ENCODE measurements at regions of chr6 and their contacts with region 1.

Region 1: DNA sequence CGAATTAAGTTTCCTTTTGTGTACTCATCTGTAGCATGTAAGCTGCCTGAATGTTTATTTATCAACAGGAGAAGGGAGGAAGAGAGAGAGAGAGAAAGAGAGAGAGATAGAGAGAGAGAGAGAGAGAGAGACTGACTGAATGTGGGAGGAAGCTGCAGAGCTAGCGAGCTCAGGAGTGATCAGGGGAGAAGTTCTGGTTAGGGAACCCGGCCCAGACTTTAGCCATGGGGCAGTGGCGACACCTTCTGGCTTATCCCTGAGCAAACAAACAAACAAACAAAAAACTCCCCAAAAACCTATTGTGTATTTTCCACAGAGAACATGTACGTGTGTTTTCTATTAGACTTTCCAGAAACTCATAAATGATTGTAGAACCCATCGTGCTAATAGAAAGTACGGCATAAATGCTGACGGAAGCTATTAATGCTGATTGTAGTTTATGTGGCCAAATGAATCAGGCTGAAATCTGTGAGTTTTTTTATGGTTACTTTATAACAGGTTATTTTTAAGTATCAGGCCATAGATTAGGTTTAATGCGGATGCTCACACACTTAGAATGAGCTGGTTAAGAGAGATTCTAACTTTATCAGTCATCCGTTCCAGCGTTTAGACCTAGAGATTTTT is 92.8 kb downstream of the CLIC5 start:
- DNase-seq: peak; percentile 83
- H3K4me3 Mint-ChIP-seq: no peak overlapping the region
- H3K27ac Mint-ChIP-seq: peak overlapping the region; percentile 71
- H3K4me1 Mint-ChIP-seq: peaks cover 34% of the 10 kb centered on the region
- H3K27me3 Mint-ChIP-seq: peaks cover 12% of the 10 kb centered on the region

Region 2: GRCh38 chr6:44593539-44593944 is 1329.3 kb before region 1 on chr6:
- CTCF ChIA-PET with region 1: interaction called, 4 read pairs
- intact Hi-C with region 1: loop called (anchors 1 kb)
- DNase-seq: peak; percentile 78
- H3K4me3 Mint-ChIP-seq: no peak overlapping the region
- H3K27ac Mint-ChIP-seq: no peak overlapping the region
- H3K4me1 Mint-ChIP-seq: peaks cover 3% of the 10 kb centered on the region
- H3K27me3 Mint-ChIP-seq: peaks cover 4% of the 10 kb centered on the region

Region 3: DNA sequence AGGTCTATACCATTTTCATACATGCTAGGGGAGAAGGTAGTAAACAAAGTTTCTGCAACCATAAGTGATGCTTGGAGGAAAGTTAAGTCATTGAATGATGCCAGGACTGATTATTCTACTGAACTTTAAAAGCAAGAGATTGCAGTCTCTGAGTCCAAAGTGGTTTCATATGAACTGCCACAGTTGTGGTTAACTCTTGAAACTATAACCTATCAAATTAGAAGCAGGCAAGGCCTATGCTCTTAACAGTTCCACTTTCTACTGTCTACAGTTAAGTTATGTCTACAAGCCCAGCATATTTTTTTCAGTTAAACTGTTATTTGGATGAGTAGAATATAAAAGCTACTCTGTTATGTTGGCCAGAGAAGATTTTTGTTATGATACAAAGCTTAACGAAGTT is 921.2 kb before region 1 on chr6:
- CTCF ChIA-PET with region 1: no interaction called
- intact Hi-C with region 1: loop called (anchors 10 kb)
- DNase-seq: no peak
- H3K4me3 Mint-ChIP-seq: no peak overlapping the region
- H3K27ac Mint-ChIP-seq: no peak overlapping the region
- H3K4me1 Mint-ChIP-seq: peaks cover 19% of the 10 kb centered on the region
- H3K27me3 Mint-ChIP-seq: no peaks in the 10 kb centered on the region

Region 4: DNA sequence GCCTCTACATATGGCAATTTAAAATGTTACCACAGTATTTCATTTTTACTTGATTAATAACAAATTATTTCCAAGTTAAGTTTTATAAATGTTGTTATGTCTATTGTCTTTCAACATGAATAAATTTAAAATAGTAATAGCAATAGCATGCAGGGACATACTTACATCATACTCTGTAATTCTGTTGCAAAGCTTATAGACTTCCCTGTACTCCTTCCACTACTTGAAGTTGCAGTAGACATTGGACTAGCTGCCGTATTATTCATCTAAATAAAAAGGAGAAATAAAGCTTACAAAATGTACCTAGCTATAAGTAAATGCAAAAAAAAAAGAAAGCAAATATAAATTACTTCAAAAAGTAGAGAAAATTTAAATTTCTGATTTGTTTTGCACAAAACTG is 557.8 kb before region 1 on chr6:
- CTCF ChIA-PET with region 1: no interaction called
- intact Hi-C with region 1: no loop called
- DNase-seq: no peak
- H3K4me3 Mint-ChIP-seq: no peak overlapping the region
- H3K27ac Mint-ChIP-seq: no peak overlapping the region
- H3K4me1 Mint-ChIP-seq: peaks cover 13% of the 10 kb centered on the region
- H3K27me3 Mint-ChIP-seq: no peaks in the 10 kb centered on the region

Region 5: DNA sequence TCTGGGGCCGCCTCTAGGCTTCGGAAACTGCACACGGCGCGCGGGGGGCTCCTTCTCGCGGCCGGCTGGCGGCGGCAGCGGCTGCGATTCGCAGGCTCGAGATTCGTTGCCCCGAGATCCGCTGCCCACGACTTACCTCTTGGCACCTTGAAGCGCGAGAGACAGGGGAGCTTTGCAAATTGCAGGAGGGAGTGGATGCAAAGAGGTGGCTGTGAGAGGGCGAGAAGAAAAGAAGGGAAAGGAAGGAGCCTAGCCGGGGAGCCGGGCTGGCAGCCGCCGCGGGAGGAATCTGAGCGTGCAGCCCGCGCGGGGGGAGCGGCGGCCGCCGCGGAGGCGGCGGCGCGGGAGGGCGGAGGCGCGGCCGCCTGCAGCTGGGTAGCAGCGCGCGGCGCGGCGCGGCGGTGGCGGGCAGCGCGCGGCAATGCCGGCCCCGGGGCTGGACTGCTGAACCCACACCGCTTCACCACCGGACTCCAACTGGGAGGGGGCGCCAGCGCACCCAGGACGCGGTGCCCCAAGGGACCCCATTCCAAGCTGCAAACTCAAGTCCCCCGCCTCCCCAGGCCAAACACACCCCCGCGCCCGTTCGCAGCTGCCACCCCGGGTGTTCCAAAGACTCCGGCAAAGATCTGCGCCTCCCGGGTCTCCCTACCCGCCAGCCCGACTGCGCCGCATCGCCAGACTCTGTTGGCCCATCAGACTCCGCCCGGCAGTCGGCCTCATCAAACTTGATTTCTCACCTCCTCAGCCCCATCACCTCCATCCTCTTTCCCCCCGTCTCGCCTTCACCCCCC is 500.9 kb before region 1 on chr6:
- CTCF ChIA-PET with region 1: interaction called, 6 read pairs
- intact Hi-C with region 1: loop called (anchors 1 kb)
- DNase-seq: peak; percentile 62
- H3K4me3 Mint-ChIP-seq: peak overlapping the region; percentile 93
- H3K27ac Mint-ChIP-seq: peak overlapping the region; percentile 88
- H3K4me1 Mint-ChIP-seq: peaks cover 29% of the 10 kb centered on the region
- H3K27me3 Mint-ChIP-seq: peaks cover 13% of the 10 kb centered on the region

Region 6: DNA sequence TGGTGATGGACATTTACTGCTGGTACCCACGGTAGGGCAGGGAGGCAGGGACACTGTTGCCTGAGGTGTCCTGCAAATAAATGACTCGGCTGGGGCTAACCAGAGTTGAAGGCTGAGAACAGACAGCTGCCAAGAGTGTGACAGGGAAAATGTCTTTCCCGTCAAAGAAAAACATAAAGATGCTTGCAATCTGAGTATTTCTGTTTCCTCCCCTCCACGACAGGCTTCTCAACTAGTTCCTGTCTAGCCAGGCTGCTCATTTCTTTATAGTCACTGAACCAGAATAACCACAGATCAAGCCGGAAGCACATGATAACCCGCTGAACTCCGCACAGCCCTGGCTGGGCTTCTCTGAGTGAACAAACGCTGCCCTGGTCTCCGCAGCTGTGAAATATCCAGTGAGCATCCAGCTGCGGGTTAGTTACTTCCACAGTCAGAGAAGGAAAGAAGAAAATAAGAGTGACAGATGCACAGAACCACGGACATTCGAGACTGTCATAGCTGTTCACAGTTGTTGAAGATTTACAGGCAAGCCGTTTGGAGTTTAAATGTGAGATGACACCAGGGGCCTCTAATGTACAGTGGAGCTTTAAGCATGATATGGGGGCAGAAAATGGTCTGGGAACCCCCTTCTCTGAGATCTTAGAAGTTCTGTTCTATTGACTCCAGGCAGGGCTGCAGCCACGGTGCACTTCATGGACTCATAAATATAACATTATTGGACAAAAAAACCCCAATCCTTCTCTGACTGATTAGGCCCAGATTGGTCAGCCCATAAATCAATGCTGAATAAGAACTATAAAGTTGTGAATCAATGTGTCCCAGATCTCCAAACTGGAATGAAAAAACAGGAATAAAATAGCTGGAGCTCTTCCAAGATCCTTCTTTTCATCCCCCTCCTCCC is 245.2 kb before region 1 on chr6:
- CTCF ChIA-PET with region 1: no interaction called
- intact Hi-C with region 1: loop called (anchors 1 kb)
- DNase-seq: peak; percentile 74
- H3K4me3 Mint-ChIP-seq: peak overlapping the region; percentile 45
- H3K27ac Mint-ChIP-seq: peak overlapping the region; percentile 68
- H3K4me1 Mint-ChIP-seq: peaks cover 33% of the 10 kb centered on the region
- H3K27me3 Mint-ChIP-seq: no peaks in the 10 kb centered on the region

Region 7: DNA sequence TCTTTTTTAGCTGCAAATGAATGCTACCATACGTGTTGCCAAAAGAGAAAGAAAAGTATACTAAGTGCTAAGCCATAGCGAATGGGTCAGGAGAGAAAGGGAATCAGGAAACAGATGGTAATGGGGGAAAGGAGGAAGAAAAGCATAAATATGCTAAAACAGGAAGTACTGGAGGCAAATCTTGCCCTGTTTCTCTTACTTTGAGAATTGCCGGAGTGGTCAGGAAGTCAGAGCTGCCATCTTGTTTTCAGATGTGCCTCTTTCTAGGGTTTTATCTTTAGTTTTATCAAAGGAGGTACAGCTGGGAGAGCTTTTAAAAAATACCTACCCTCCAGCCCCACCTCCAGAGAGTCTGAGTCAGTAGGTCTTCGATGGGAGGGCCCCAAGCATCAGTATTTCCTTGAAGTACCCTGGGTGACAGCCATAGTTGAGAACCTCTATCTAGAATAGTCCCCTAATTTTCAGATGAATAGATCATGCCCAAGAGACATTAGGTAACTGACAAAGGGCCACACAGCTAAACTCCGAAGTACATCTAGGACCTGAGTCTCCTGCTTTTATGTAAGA is 100.5 kb before region 1 on chr6:
- CTCF ChIA-PET with region 1: no interaction called
- intact Hi-C with region 1: loop called (anchors 1 kb)
- DNase-seq: peak; percentile 59
- H3K4me3 Mint-ChIP-seq: peak overlapping the region; percentile 1
- H3K27ac Mint-ChIP-seq: peak overlapping the region; percentile 74
- H3K4me1 Mint-ChIP-seq: peaks cover 19% of the 10 kb centered on the region
- H3K27me3 Mint-ChIP-seq: peaks cover 4% of the 10 kb centered on the region

Region 8: DNA sequence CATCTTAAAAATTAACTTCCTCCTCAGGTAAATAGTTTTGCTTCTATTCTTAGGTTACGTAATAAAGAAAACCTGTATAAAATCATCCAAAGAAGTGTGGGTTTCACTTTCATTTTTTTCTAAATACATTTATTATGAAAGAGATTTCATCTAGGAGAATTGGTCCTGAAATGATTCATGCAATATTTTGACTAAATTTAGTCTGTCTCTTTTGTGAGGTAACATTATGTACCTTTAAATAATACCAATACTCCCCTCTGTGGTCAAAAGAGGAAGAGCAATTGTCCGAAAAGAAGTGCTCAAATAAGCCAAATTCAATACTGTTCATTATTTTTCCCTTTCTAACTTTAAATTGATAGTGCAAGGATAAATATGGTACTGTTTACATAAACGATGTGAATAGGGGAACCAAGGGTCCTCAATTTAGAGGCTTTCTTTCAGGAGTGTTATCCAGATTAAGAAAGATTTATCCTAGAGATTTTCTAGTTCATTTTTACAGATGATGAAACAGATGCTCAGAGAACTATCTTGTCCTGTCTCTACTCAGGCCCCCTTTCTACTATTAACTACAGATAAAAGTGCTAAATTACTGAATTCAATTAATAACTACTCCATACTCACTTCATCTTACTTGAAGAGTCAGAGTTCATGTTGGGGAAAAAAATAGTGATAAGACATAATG is 703.5 kb after region 1 on chr6:
- CTCF ChIA-PET with region 1: no interaction called
- intact Hi-C with region 1: loop called (anchors 5 kb)
- DNase-seq: no peak
- H3K4me3 Mint-ChIP-seq: no peak overlapping the region
- H3K27ac Mint-ChIP-seq: no peak overlapping the region
- H3K4me1 Mint-ChIP-seq: peaks cover 10% of the 10 kb centered on the region
- H3K27me3 Mint-ChIP-seq: peaks cover 3% of the 10 kb centered on the region

Measured in activated naive CD4-positive, alpha-beta T cell treated with anti-CD3 and anti-CD28 coated beads for 36 hours (primary cell).